ENCODE measurements at regions of chr1 and their contacts with region 1.

Region 1: GRCh38 chr1:999725-1000356 is at the start of gene HES4:
- DNase-seq: peak; percentile 60
- ATAC-seq: peak; percentile 36
- H3K4me3 Mint-ChIP-seq: peak within 1 kb of the TSS; percentile 65
- H3K27ac Mint-ChIP-seq: peak within 1 kb of the TSS; percentile 74
- H3K4me1 Mint-ChIP-seq: peaks cover 29% of the 10 kb centered on the region
- H3K27me3 Mint-ChIP-seq: peaks cover 36% of the 10 kb centered on the region
- total RNA-seq, gene HES4: 0.45 to 0.50 TPM

Region 2: DNA sequence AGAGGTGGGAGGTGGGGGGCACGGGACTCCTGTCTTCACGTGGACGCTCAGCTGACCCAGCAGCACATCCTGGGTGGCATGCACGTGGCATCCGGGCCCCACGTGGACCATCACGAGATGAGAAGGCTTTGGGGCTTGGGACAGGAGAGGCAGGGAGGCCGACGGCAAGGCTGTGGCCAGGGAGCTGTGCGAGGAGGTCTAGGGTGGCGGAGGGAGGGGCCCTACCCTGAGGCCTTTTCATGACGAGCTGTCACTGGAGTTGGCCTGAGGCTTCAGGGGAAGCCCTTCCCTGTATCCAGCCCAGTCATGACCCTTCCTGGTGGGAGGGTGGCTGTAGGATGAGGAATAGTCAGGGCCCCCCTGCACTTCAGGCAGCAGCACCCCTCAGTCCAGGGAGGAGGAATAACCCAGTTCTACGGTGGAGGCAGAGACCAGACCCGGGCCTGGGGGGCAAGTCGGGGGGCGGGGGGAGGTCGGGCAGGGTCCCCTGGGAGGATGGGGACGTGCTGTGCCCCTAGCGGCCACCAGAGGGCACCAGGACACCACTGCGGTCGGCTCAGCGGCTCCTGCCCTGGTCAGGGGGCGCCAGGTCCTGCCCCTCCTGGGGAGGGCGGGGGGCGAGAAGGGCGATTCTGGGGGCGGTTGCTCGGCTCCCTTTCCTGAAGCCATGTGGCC is 15.9 kb before region 1 on chr1:
- CTCF ChIA-PET with region 1: interaction called, 37 read pairs
- POLR2A ChIA-PET with region 1: no interaction called
- DNase-seq: peak; percentile 68
- ATAC-seq: peak; percentile 80
- H3K4me3 Mint-ChIP-seq: no peak overlapping the region
- H3K27ac Mint-ChIP-seq: no peak overlapping the region
- H3K4me1 Mint-ChIP-seq: no peaks in the 10 kb centered on the region
- H3K27me3 Mint-ChIP-seq: peaks cover 23% of the 10 kb centered on the region

Region 3: DNA sequence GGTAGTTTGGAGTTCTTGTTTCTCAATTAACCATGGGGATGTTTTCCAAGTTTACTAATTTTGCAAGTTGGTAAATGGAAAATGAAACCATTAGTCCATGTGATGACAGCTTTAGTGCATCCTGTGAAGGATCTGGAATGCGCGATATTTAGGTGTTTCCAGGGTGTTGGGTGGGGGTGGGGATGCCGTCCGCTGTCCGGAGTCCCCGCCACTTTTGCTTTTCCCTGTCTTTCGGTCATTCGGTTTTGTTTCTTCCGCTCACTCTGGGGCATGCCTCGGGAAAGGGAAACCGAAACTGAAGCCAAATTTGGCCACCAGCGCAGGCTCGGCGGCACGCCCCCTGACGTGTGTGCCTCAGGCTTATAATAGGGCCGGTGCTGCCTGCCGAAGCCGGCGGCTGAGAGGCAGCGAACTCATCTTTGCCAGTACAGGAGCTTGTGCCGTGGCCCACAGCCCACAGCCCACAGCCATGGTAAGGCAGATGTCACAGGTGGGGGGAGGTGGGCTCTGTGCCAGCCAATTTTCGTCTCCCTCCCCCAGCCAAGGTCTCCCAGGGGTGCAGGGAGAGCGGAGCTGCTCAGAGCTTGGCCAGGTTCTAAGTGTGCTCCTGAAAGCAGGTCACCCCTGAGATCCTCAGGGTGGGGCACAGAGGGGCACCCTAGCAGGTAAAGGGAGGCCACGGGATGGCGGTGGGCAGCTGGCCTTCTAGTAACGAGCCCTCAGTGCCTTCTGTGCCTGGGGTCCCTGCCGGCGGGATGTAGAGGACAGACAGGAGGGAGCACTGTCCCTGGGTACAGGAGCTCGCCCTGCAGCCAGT is 13.5 kb after region 1 on chr1 and contains the start of gene ISG15:
- CTCF ChIA-PET with region 1: interaction called, 31 read pairs
- POLR2A ChIA-PET with region 1: interaction called, 29 read pairs
- DNase-seq: peak; percentile 95
- ATAC-seq: peak; percentile 90
- H3K4me3 Mint-ChIP-seq: peak within 1 kb of the TSS; percentile 97
- H3K27ac Mint-ChIP-seq: peak within 1 kb of the TSS; percentile 99
- H3K4me1 Mint-ChIP-seq: peaks cover 49% of the 10 kb centered on the region
- H3K27me3 Mint-ChIP-seq: peaks cover 4% of the 10 kb centered on the region
- total RNA-seq, gene ISG15: 385 to 413 TPM

Region 4: GRCh38 chr1:1264868-1265272 is 265.0 kb after region 1 on chr1:
- CTCF ChIA-PET with region 1: no interaction called
- POLR2A ChIA-PET with region 1: no interaction called
- DNase-seq: no peak
- ATAC-seq: no peak
- H3K4me3 Mint-ChIP-seq: no peak overlapping the region
- H3K27ac Mint-ChIP-seq: no peak overlapping the region
- H3K4me1 Mint-ChIP-seq: peaks cover 14% of the 10 kb centered on the region
- H3K27me3 Mint-ChIP-seq: no peaks in the 10 kb centered on the region

Region 5: DNA sequence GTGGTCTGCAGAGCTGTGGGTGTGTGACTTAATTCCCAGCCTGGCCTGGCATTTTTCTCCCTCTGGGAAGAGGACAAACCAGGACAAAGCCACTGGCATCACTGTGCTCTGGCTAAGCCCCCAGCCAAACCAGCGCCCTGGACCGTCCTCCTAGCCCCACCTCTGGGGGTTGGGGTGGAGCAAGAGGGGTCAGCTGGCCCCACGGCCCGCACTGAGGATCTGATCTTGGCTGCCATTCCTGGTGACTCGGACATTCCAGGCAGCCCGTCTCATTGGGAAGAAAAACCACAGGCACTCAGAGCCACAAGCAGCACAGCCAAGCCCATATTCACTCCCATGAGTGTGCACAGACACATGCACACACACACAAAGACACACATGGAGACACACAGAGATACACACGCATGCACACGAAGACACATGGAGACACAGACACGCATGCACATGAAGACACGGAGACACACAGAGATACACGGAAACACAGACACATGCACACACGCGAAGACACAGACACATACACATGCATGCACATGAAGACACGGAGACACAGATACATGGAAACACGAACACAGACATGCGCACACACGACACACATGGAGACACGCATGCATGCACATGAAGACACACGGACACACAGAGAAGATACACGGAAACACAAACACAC is 360.8 kb after region 1 on chr1:
- CTCF ChIA-PET with region 1: no interaction called
- POLR2A ChIA-PET with region 1: no interaction called
- DNase-seq: no peak
- ATAC-seq: no peak
- H3K4me3 Mint-ChIP-seq: no peak overlapping the region
- H3K27ac Mint-ChIP-seq: no peak overlapping the region
- H3K4me1 Mint-ChIP-seq: peaks cover 18% of the 10 kb centered on the region
- H3K27me3 Mint-ChIP-seq: peaks cover 16% of the 10 kb centered on the region